Endothelial cell of umbilical vein (primary cell): ENCODE measurements at regions of chr3 and their contacts with region 1.

Region 1: GRCh38 chr3:63911873-63912767 is at the start of gene SCAANT1:
- DNase-seq: peak; percentile 86
- H3K4me3 ChIP-seq: peak within 1 kb of the TSS; percentile 74 to 85 (median 79)
- H3K27ac ChIP-seq: peak within 1 kb of the TSS; percentile 85
- H3K4me1 ChIP-seq: peaks cover 24% of the 10 kb centered on the region
- H3K27me3 ChIP-seq: no peaks in the 10 kb centered on the region
- CTCF ChIP-seq: no peak
- POLR2A ChIP-seq: no peak
- total RNA-seq, gene SCAANT1: not detected in 2 replicates

Region 2: DNA sequence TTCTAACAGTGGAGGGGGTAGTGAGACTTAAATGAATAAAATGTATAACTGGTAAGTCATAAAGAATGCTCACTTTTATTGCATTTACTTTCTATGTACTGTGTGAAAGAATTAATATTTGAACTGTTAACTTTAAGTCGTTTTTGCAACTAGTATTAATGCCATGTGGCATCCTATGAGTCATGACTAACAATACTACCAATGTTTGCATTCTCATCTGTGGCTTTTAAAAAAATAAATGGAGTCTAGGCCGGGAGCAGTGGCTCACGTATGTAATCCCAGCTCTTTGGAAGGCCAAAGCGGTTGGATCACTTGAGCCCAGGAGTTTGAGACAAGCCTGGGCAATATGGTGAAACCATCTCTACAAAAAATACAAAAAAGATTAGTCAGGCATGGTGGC is 87.8 kb before region 1 on chr3:
- CTCF ChIA-PET with region 1: interaction called, 6 read pairs
- POLR2A ChIA-PET with region 1: no interaction called
- dilution Hi-C with region 1: no loop called
- intact Hi-C with region 1: loop called (anchors 5 kb)
- DNase-seq: peak; percentile 17
- H3K4me3 ChIP-seq: no peak overlapping the region
- H3K27ac ChIP-seq: no peak overlapping the region
- H3K4me1 ChIP-seq: peaks cover 3% of the 10 kb centered on the region
- H3K27me3 ChIP-seq: no peaks in the 10 kb centered on the region
- CTCF ChIP-seq: no peak
- POLR2A ChIP-seq: no peak

Region 3: DNA sequence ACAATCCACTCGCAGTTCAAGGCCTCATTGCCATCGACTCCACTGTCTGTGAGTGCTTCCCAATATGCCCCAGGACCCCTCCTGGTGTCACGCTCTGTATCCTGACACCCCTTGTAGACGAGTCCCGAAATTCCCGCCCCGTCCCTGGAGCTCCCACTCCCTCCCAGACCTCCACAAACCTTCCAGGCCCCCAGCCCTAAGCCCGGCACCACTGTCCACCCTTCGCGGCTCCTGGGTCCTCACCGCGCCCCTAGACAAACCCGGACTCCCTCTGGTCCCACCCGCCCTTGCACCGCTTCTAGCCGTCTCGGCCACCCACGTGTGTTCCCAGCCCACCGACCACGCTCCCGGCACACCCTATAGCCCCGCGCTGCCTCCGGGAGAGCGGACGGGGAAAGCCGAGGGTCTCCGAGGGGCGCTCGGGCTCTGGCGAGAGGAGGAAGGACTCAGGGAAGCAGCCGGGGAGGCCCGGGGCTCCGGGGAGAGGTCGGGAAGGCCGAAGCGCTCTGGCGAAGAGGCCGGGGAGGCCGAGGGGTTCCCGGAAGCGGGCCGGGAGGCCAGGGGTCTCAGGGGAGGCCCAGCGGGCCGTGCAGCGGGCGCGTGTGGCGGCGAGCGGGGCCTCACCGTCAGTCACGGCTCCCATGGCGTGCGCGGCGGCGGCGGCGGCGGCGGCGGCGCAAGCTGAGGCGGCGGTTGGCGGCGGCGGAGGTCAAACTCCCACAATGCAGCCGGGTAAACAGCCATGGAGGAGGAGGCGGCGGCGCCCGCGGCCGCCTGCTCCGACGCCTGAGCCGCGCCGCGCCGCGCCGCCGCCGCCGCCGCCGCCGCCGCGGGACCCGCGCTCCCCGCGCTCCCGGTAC is 48.7 kb before region 1 on chr3 and contains the starts of genes ATXN7 and THOC7:
- CTCF ChIA-PET with region 1: interaction called, 4 read pairs
- POLR2A ChIA-PET with region 1: no interaction called
- dilution Hi-C with region 1: no loop called
- intact Hi-C with region 1: loop called (anchors 1 kb)
- DNase-seq: peak; percentile 50
- H3K4me3 ChIP-seq: peak within 1 kb of the TSS; percentile 42 to 99 (median 68)
- H3K27ac ChIP-seq: peak within 1 kb of the TSS; percentile 75
- H3K4me1 ChIP-seq: peaks cover 12% of the 10 kb centered on the region
- H3K27me3 ChIP-seq: no peaks in the 10 kb centered on the region
- CTCF ChIP-seq: no peak
- POLR2A ChIP-seq: no peak
- total RNA-seq, gene ATXN7: 27.1 and 34.7 TPM in 2 replicates
- total RNA-seq, gene THOC7: 68.7 and 69.4 TPM in 2 replicates

Region 4: GRCh38 chr3:64049136-64049535 is 137.0 kb after region 1 on chr3:
- CTCF ChIA-PET with region 1: no interaction called
- POLR2A ChIA-PET with region 1: no interaction called
- dilution Hi-C with region 1: no loop called
- intact Hi-C with region 1: no loop called
- DNase-seq: peak; percentile 16
- H3K4me3 ChIP-seq: no peak overlapping the region
- H3K27ac ChIP-seq: no peak overlapping the region
- H3K4me1 ChIP-seq: no peaks in the 10 kb centered on the region
- H3K27me3 ChIP-seq: peaks cover 4 to 12% of the 10 kb centered on the region in 2 experiments
- CTCF ChIP-seq: no peak
- POLR2A ChIP-seq: no peak